Heart left ventricle (tissue), 16 donors: ENCODE measurements at regions of chr2 and their contacts with region 1.

Region 1: DNA sequence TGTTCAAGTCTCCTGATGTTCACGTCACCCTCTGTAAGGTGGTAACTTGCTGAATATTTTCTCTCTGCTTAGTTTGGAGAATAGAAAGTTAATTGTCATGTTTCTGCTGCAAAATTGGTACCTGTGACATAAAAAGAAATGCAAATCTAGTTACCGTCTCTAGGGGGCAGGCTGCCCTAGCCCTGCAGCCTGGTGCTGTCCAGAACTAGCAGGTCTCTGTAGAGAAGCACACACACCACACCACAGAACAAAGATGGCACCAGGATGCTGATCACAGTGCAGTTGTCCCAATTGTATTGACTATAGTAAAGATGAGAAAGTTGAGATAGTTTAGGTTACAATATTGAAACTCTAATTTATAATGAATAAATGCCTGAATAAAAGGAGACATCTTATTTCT is 47.0 kb downstream of the SLC9A4 start:
- DNase-seq: no peak
- ATAC-seq: peak in 2 of 4 donors; percentile 59 to 64
- H3K4me3 ChIP-seq: no peak overlapping the region
- H3K27ac ChIP-seq: no peak overlapping the region
- H3K4me1 ChIP-seq: no peaks in the 10 kb centered on the region
- H3K27me3 ChIP-seq: peaks cover 0 to under 1% (median 0%) of the 10 kb centered on the region in 9 donors
- CTCF ChIP-seq: peak; percentile 26 to 72 (median 54)
- POLR2A ChIP-seq: no peak

Region 2: DNA sequence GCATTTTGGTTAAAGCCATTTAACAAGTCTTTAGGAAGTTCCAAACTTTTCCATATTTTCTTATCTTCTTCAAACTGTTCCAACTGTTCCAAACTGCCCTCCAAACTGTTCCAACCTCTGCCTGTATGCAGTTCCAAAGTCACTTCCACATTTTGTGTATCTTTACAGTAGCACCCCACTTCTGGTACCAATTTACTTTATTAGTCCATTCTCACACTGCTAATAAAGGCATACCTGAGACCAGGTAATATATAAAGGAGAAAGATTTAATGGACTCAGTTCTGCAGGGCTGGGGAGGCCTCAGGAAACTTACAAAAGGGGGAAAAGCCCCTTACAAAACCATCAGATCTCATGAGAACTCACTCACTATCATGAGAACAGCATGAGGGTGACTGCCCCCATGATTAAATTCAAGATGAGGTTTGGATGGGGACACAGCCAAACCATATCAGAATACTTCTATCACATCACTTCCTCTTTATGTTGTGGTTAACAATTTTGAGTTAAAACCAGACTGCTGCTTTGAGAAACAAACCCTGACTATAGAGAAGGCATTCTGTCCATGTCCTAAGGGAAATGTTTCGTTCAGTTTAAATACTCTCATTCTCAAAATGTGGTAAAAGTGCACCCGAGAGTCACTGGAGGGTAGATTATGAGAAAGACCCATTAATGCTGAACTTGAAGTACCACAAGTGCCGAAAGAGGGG is 153.5 kb before region 1 on chr2:
- intact Hi-C with region 1: no loop called
- DNase-seq: no peak
- ATAC-seq: no peak
- H3K4me3 ChIP-seq: no peak overlapping the region
- H3K27ac ChIP-seq: peak overlapping the region in 1 of 12 donors; percentile 73
- H3K4me1 ChIP-seq: no peaks in the 10 kb centered on the region
- H3K27me3 ChIP-seq: no peaks in the 10 kb centered on the region
- CTCF ChIP-seq: no peak
- POLR2A ChIP-seq: no peak

Region 3: GRCh38 chr2:102615622-102616436 is 95.8 kb after region 1 on chr2:
- intact Hi-C with region 1: loop called in 2 of 10 experiments (anchors 2 to 10 kb)
- DNase-seq: peak; percentile 20 to 73 (median 37)
- ATAC-seq: peak in 3 of 4 donors; percentile 64 to 86 (median 79)
- H3K4me3 ChIP-seq: no peak overlapping the region
- H3K27ac ChIP-seq: no peak overlapping the region
- H3K4me1 ChIP-seq: peaks cover 0 to 17% (median 6%) of the 10 kb centered on the region in 12 donors
- H3K27me3 ChIP-seq: peaks cover 6 to 58% (median 18%) of the 10 kb centered on the region in 9 donors
- CTCF ChIP-seq: peak; percentile 53 to 83 (median 68)
- POLR2A ChIP-seq: no peak

Region 4: DNA sequence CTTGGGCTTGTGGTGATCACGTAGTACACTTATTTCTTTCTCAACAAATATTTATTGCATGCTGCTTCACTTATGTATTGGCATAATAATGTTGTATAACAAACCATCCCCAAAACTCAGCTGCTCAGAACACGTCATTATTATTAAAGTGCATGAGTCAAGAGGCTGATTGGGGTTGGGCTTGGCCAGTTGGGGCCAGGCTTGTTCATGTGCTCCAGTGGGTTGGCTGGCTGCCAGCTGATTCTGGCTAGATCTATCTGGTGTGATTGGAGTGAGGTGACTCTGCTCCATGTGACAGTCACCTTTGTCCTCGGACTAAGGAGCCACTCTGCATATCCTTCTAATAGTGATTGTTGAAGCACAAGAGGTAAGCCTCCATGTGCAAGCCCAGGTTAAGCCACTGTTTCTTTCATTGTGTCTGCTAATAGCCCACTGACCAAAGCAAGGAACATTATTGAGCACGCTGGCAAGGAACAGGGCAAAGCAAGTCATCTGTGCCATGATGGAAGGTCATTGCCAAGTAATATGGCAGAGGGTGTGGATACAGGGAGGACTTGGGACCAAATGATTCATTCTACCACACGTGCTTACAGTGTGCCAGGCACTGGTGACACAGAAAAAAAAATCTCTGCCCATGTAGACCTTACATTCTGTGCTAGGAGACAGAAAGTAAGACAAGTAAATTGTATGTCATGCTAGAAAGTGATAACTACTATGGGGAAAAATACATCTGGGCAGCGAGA is 178.5 kb after region 1 on chr2:
- intact Hi-C with region 1: loop called in 4 of 10 experiments (anchors 2 to 5 kb)
- DNase-seq: no peak
- ATAC-seq: no peak
- H3K4me3 ChIP-seq: no peak overlapping the region
- H3K27ac ChIP-seq: no peak overlapping the region
- H3K4me1 ChIP-seq: no peaks in the 10 kb centered on the region
- H3K27me3 ChIP-seq: peaks cover 0 to 9% (median 0%) of the 10 kb centered on the region in 9 donors
- CTCF ChIP-seq: no peak
- POLR2A ChIP-seq: no peak

Region 5: GRCh38 chr2:102703748-102704147 is 183.7 kb after region 1 on chr2:
- intact Hi-C with region 1: loop called in 4 of 10 experiments (anchors 2 to 5 kb)
- DNase-seq: no peak
- ATAC-seq: peak; percentile 51 to 63 (median 62)
- H3K4me3 ChIP-seq: no peak overlapping the region
- H3K27ac ChIP-seq: no peak overlapping the region
- H3K4me1 ChIP-seq: no peaks in the 10 kb centered on the region
- H3K27me3 ChIP-seq: peaks cover 0 to 14% (median 5%) of the 10 kb centered on the region in 9 donors
- CTCF ChIP-seq: peak in 11 of 12 donors; percentile 15 to 51 (median 37)
- POLR2A ChIP-seq: no peak